OCI-LY7 (cell line): ENCODE measurements at regions of chr12 and their contacts with region 1.

Region 1: DNA sequence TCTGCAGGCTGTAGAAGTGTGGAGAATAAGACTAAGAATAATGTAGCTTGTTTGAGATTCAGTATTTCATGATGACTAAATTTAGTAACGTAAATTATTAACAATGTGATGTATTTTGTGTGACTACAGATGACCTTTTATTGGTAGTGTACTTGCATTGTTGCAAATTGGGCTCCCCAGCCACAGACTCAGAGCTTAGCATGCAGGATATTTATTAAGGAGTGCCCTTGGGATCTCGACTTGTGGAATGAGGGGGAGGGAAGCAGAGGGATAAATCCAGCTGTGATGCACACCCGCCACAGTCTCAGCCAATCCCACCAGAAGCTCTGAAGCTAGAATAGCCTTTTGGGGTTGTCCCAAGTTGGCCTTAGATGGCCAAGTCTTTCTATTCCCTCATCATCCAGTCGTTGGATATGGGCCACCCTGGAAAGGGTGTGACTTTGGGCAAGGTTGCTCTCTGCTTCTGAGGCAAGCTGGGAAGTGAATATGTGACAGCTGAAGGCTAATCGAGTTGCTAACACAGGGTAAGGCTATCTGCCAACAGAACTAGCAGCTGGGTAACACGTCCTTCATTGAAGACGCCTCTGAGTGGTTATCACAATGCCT is 42.1 kb upstream of the USP44 start:
- DNase-seq: no peak
- H3K4me3 ChIP-seq: no peak overlapping the region
- H3K27ac ChIP-seq: no peak overlapping the region
- H3K4me1 ChIP-seq: no peaks in the 10 kb centered on the region
- CTCF ChIP-seq: no peak

Region 2: DNA sequence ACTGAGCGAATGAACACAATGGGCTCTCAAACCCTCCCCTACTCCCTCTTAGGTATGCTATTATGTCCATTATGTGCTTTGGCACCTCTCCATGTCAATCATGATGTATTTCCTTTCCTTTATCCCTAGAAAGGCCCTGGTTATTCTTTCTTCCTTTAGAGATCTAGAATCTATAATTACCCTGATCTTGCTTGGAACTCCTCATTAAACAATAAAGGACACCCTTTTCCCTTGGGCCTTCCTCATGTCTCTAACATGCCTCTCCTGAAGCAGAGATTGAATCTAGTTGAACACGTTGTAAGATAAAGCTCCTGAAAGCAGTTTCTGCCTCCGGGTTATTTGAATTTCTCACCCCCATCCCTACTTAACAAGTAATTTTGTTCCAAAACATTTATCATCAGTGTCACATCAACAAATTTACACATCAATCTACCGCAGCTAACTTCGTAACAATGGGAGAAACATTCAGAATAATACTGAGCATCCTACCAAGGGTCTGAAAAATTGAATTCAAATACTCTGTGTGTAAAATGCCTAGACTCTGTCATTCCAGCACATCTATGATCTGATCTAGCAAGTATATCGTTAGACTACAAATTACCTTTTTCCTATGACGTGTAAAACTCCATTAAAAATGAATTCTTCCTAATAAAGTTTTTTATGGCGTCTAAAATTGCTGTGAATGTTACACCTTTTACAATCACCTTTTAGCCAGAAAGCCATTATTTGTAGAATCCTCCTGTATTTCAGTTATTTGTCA is 47.5 kb before region 1 on chr12:
- CTCF ChIA-PET with region 1: no interaction called
- POLR2A ChIA-PET with region 1: no interaction called
- intact Hi-C with region 1: no loop called
- DNase-seq: no peak
- H3K4me3 ChIP-seq: no peak overlapping the region
- H3K27ac ChIP-seq: no peak overlapping the region
- H3K4me1 ChIP-seq: peaks cover 13% of the 10 kb centered on the region
- CTCF ChIP-seq: no peak

Region 3: GRCh38 chr12:95582230-95583058 is 10.9 kb before region 1 on chr12:
- CTCF ChIA-PET with region 1: no interaction called
- POLR2A ChIA-PET with region 1: interaction called, 17 read pairs
- intact Hi-C with region 1: no loop called
- DNase-seq: peak; percentile 19
- H3K4me3 ChIP-seq: no peak overlapping the region
- H3K27ac ChIP-seq: no peak overlapping the region
- H3K4me1 ChIP-seq: no peaks in the 10 kb centered on the region
- CTCF ChIP-seq: peak; percentile 65